Activated naive CD8-positive, alpha-beta T cell treated with anti-CD3 and anti-CD28 coated beads, Interleukin-2, amount 10 ng/mL, durations not matched to agents 7 days and 5 days (primary cell): ENCODE measurements at regions of chr6 and their contacts with region 1.

Region 1: DNA sequence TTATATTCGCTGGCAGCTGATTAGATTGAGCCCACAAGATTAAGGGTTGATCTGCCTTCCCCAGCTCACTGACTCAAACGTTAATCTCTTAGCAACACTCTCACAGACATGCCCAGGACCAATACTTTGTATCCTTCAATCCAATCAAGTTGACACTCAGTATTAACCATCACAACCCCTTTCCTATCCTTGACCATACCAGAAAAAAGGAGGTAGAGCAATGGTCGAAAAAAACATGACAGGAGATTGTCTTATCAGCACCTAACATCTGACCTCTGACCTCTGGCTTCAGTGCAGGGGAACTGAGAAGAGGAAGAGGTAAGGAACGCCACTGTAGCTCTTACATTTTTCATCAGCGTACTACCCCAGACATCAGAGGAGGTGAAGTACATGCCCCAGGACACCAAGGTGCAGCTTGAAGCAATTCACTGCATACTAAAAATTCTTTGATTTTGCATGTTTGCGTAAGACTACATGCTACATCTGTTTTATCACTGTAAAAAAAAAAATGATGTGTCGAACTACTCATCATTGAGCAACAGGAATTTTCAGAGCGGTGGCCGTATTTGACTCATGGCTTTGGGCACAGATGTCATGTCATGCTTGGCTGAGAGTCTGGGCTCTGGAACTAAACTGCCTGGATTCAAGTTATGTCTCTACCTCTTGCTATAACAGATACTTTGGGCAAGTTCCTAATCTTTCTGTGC is 188.0 kb upstream of the TAB2 start:
- DNase-seq: no peak
- ATAC-seq: no peak
- H3K4me3 Mint-ChIP-seq: no peak overlapping the region
- H3K27ac Mint-ChIP-seq: peak overlapping the region; percentile 90
- H3K4me1 Mint-ChIP-seq: peaks cover 57% of the 10 kb centered on the region
- H3K27me3 Mint-ChIP-seq: no peaks in the 10 kb centered on the region

Region 2: DNA sequence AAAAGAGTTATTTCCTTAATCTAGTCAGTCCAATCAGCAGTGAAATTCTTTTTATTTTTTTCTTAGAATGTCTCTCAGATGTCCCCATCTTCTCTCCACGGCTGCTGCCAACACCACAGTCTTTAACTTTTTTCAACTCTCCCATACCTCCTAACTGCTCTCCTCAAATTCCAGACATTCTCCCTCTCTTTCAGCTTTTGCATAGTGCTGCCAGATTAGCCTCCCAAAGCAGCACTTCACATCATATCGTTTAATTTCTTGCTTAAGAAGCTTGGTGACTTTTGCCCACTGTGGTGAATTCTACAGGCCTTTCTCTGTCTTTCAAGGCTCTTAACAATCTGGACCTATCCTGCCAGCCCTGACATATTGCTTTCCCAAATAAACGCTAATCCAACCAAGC is 149.3 kb before region 1 on chr6:
- POLR2A ChIA-PET with region 1: no interaction called
- DNase-seq: no peak
- ATAC-seq: no peak
- H3K4me3 Mint-ChIP-seq: no peak overlapping the region
- H3K27ac Mint-ChIP-seq: no peak overlapping the region
- H3K4me1 Mint-ChIP-seq: no peaks in the 10 kb centered on the region
- H3K27me3 Mint-ChIP-seq: peaks cover 18% of the 10 kb centered on the region

Region 3: GRCh38 chr6:149075616-149076364 is 53.7 kb before region 1 on chr6:
- POLR2A ChIA-PET with region 1: no interaction called
- DNase-seq: no peak
- ATAC-seq: no peak
- H3K4me3 Mint-ChIP-seq: peak overlapping the region; percentile 3
- H3K27ac Mint-ChIP-seq: peak overlapping the region; percentile 36
- H3K4me1 Mint-ChIP-seq: peaks cover 14% of the 10 kb centered on the region
- H3K27me3 Mint-ChIP-seq: no peaks in the 10 kb centered on the region

Region 4: DNA sequence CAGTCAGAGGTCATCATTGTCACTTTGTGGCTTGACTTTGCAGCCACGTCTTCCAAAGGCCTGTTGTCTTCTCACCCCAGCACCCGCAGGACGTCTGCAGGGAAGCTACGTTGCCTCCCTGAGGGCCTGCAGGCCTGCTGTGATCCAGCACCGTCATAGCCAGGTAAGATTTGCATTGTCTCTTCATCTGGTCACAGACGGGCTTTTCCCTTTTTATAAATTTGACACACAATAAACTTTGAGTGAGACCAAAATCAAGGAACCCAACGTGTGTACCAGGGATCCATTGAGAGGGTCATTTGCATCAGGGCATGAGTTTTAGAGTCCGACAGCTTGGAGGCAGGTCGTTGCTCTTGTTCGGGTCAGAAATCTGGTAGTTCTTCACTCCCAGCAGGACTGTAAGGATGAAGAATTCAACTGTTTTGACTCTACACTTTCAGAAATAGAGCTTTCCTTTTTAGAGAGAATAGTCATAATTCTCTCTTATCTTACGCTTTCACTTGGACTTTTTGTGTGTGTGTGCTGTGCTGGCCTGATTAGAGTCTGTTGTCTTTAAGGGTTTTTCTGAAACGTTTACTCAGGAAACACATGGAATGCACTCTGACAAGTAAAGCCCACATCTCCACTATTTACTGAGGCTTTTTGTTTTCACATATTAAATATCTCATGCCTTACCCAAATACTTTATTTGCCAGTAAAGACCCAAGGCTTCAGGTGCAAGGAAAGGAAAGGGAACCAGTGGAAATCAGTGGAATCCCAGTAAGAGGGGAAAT is 10.8 kb after region 1 on chr6:
- POLR2A ChIA-PET with region 1: interaction called, 34 read pairs
- DNase-seq: peak; percentile 57
- ATAC-seq: peak; percentile 65
- H3K4me3 Mint-ChIP-seq: peak overlapping the region; percentile 86
- H3K27ac Mint-ChIP-seq: peak overlapping the region; percentile 99
- H3K4me1 Mint-ChIP-seq: peaks cover 36% of the 10 kb centered on the region
- H3K27me3 Mint-ChIP-seq: no peaks in the 10 kb centered on the region

Region 5: GRCh38 chr6:149164199-149164750 is 34.8 kb after region 1 on chr6:
- POLR2A ChIA-PET with region 1: no interaction called
- DNase-seq: no peak
- ATAC-seq: no peak
- H3K4me3 Mint-ChIP-seq: no peak overlapping the region
- H3K27ac Mint-ChIP-seq: no peak overlapping the region
- H3K4me1 Mint-ChIP-seq: peaks cover 29% of the 10 kb centered on the region
- H3K27me3 Mint-ChIP-seq: peaks cover 2% of the 10 kb centered on the region